ENCODE measurements at regions of chr3 and their contacts with region 1.

Region 1: DNA sequence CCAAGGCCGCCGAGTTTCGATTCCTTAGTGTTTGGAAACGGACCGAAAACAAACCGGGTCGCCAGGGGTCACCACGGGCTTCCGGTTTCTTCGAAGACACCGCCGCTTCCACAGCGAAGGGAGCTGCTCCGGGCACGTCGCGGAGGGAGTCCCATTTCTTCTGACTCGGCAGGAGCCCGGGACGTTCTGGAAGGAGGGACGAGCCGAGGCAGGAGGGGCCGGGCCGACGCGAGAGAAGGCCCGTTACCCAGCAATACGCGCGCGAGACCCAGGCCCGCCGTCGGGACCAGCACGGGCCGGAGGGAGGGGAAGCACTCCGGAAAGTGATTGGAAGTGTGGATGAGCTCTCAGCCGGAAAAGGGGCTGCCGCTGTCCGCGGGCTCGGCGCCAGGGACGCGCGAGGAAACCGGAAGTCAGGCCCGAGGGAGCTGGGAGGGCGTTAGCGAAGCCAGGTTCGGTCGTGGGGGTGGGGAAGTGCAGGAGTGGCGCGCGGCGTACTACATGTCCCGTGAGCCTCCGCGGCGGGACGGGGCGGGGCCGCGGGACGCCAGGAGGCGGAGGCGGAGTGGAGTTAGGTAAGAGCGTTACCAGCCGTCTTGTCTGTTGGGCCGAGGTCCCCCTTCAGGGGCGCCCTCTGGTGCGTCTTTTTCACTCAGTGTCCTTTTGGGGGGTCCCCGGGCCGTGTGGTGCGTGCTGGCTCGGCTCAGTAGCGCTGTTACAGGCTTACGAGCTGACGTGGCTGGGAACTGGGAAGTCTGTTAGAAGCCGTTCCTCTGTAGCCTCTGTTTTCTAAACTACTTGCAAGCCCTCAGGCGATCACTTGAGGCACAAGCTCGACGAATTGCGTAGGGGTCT is at the starts of genes AZI2 and ZCWPW2:
- DNase-seq: peak; percentile 94
- H3K4me3 ChIP-seq: peak within 1 kb of the TSS; percentile 90
- H3K27ac ChIP-seq: peak within 1 kb of the TSS; percentile 56
- H3K4me1 ChIP-seq: peaks cover 31% of the 10 kb centered on the region
- CTCF ChIP-seq: peak; percentile 49
- total RNA-seq, gene AZI2: 16.1 and 16.4 TPM in 2 replicates
- total RNA-seq, gene ZCWPW2: not detected in 2 replicates

Region 2: GRCh38 chr3:28241221-28242160 is 107.4 kb before region 1 on chr3 and contains the start of gene CMC1:
- CTCF ChIA-PET with region 1: no interaction called
- POLR2A ChIA-PET with region 1: interaction called, 3 read pairs
- intact Hi-C with region 1: loop called (anchors 2 kb)
- DNase-seq: peak; percentile 92
- H3K4me3 ChIP-seq: peak within 1 kb of the TSS; percentile 79
- H3K27ac ChIP-seq: peak within 1 kb of the TSS; percentile 43
- H3K4me1 ChIP-seq: peaks cover 15% of the 10 kb centered on the region
- CTCF ChIP-seq: no peak
- total RNA-seq, gene CMC1: 3.4 and 12.1 TPM in 2 replicates

Region 3: GRCh38 chr3:28334552-28334951 is 14.3 kb before region 1 on chr3:
- CTCF ChIA-PET with region 1: no interaction called
- POLR2A ChIA-PET with region 1: interaction called, 15 read pairs
- intact Hi-C with region 1: no loop called
- DNase-seq: no peak
- H3K4me3 ChIP-seq: no peak overlapping the region
- H3K27ac ChIP-seq: no peak overlapping the region
- H3K4me1 ChIP-seq: no peaks in the 10 kb centered on the region
- CTCF ChIP-seq: peak; percentile 58